ENCODE measurements at regions of chr5 and their contacts with region 1.

Region 1: DNA sequence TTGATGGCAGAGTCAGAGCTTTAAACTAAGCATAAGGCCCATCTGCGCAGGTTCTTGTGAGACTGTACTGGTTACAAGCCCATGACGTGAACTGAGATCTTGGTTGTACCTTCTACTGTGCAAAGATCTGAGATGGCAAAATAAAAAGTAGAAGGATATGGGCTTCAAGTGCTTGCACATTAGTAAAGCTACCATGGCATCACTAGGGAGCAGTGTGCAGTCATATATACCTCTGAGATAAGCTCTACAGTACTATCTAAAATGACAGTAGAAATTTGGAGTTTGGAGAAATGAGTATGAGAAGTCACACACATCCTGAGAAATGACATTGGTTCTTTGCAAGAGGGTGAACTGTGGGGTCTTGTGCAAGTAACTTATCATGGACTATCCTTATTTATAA is 408.2 kb upstream of the PRR16 start:
- DNase-seq: peak; percentile 76
- ATAC-seq: peak; percentile 97
- H3K4me3 ChIP-seq: no peak overlapping the region
- H3K27ac ChIP-seq: no peak overlapping the region
- H3K4me1 ChIP-seq: no peaks in the 10 kb centered on the region
- H3K27me3 ChIP-seq: no peaks in the 10 kb centered on the region
- CTCF ChIP-seq: peak; percentile 71
- POLR2A ChIP-seq: no peak
- RAD21 ChIP-seq: peak; percentile 72

Region 2: GRCh38 chr5:120457839-120458507 is 402.1 kb after region 1 on chr5:
- CTCF ChIA-PET with region 1: no interaction called
- POLR2A ChIA-PET with region 1: no interaction called
- dilution Hi-C with region 1: no loop called
- in situ Hi-C with region 1: no loop called
- intact Hi-C with region 1: loop called (anchors 1 kb)
- DNase-seq: peak; percentile 29
- ATAC-seq: peak; percentile 34; the same call in 1 of the 2 replicates
- H3K4me3 ChIP-seq: no peak overlapping the region
- H3K27ac ChIP-seq: no peak overlapping the region
- H3K4me1 ChIP-seq: no peaks in the 10 kb centered on the region
- H3K27me3 ChIP-seq: no peaks in the 10 kb centered on the region
- CTCF ChIP-seq: peak; percentile 53
- POLR2A ChIP-seq: no peak
- RAD21 ChIP-seq: peak; percentile 68

Region 3: GRCh38 chr5:120528609-120529008 is 472.8 kb after region 1 on chr5:
- CTCF ChIA-PET with region 1: no interaction called
- POLR2A ChIA-PET with region 1: no interaction called
- dilution Hi-C with region 1: no loop called
- in situ Hi-C with region 1: no loop called
- intact Hi-C with region 1: loop called (anchors 10 kb)
- DNase-seq: peak; percentile 36
- ATAC-seq: peak; percentile 85
- H3K4me3 ChIP-seq: no peak overlapping the region
- H3K27ac ChIP-seq: no peak overlapping the region
- H3K4me1 ChIP-seq: peaks cover 3% of the 10 kb centered on the region
- H3K27me3 ChIP-seq: no peaks in the 10 kb centered on the region
- CTCF ChIP-seq: no peak
- POLR2A ChIP-seq: no peak
- RAD21 ChIP-seq: no peak

Region 4: DNA sequence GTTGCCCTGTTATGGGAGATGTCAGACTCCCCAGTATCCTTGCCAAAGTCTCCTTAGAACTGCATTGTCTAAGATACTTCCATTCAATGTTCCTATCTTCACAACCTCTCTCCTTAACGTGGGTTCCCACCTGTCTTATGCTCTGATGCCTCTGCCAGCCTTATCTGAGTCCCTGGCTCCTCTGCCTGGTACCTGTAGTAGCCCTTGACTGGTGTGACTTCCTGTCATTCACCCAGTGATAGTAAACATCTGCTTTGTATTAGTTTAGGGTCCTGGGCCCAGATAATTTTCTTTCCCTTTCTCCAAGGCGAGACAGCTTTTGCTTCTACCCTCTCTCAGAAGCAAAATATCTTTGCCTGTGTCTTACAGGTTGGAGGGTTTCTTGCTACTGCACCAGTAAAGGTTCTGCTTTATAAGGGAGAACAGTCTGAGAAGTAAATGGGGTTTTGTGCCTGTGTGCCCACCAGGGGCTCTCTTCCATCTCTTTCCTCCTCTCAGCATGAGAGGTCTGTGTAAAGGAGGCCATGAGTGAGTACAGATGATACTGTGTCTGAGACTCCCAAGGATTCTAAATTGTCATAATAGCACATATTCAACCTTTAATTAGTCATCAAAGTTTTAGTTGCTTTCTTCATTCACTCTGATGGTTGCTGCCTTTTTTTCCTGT is 629.0 kb after region 1 on chr5:
- CTCF ChIA-PET with region 1: no interaction called
- POLR2A ChIA-PET with region 1: no interaction called
- dilution Hi-C with region 1: no loop called
- in situ Hi-C with region 1: no loop called
- intact Hi-C with region 1: loop called (anchors 5 kb)
- DNase-seq: peak; percentile 12
- ATAC-seq: peak; percentile 46; the same call in 1 of the 2 replicates
- H3K4me3 ChIP-seq: no peak overlapping the region
- H3K27ac ChIP-seq: no peak overlapping the region
- H3K4me1 ChIP-seq: peaks cover 5% of the 10 kb centered on the region; the same call in 1 of the 2 replicates
- H3K27me3 ChIP-seq: no peaks in the 10 kb centered on the region
- CTCF ChIP-seq: peak; percentile 26; the same call in 1 of the 2 replicates
- POLR2A ChIP-seq: no peak
- RAD21 ChIP-seq: no peak

Measured in IMR-90 (cell line).